Activated CD4-positive, alpha-beta T cell treated with anti-CD3 and anti-CD28 coated beads for 36 hours (primary cell): ENCODE measurements at regions of chr20 and their contacts with region 1.

Region 1: DNA sequence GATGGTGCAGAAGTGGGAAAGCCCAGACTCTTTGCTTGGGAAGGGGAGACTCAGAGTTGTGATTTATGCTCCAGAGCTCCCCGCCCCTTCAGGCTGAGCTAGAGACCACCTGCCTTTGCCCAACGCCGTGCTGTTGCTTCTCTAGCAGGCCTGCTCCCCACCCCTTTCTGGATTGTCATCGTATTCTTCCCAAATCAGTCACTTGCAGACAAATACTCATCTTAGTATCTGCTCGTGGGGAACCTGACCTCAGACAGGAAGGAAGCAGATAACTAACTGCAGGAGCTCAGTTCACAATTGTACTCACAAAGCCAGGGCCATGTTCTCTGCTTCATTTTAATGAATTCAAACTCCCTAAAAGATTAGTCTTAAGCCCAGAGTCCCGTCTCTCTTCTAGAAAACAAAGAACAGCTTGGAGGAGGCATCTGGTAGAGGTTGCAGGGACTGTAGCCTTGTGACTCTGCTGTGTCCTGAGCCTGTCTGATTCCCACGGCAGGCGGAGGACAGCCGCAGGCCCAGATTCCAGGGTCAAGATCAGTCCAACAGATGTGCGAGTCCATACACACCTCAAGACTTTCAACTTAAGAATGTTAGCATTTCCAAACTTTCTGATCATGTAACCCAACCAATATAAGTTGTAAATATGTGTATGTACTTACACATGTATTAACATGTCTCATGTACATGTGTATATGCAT is 57.2 kb upstream of the GGTLC1 start:
- DNase-seq: peak; percentile 66
- ATAC-seq: peak; percentile 87
- H3K4me3 Mint-ChIP-seq: no peak overlapping the region
- H3K27ac Mint-ChIP-seq: peak overlapping the region; percentile 75
- H3K4me1 Mint-ChIP-seq: peaks cover 51% of the 10 kb centered on the region
- H3K27me3 Mint-ChIP-seq: no peaks in the 10 kb centered on the region

Region 2: DNA sequence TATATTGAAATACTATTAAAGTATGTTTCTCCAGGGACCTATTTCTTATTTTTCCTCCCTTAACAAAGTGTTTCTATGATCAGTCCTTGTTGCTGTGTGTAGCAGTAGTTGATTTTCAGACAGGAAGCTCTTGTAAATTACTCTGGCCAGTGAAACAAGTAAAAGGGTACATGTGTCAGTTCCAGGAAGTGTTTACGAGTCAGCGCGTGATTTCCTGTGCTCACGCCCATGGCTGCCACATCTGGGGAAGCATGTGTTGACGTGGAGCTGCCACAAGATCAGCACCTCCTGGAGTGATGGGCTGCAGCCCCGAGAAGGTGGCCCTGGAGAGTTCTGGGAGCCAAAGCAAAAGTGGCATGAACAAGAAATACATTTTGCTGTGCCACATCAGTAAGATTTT is 18.5 kb before region 1 on chr20:
- CTCF ChIA-PET with region 1: interaction called, 6 read pairs
- POLR2A ChIA-PET with region 1: no interaction called
- intact Hi-C with region 1: loop called in 1 of 2 experiments (anchors 2 kb)
- DNase-seq: peak; percentile 85
- ATAC-seq: peak; percentile 96
- H3K4me3 Mint-ChIP-seq: peak overlapping the region; percentile 42
- H3K27ac Mint-ChIP-seq: peak overlapping the region; percentile 91
- H3K4me1 Mint-ChIP-seq: peaks cover 35% of the 10 kb centered on the region
- H3K27me3 Mint-ChIP-seq: no peaks in the 10 kb centered on the region

Region 3: DNA sequence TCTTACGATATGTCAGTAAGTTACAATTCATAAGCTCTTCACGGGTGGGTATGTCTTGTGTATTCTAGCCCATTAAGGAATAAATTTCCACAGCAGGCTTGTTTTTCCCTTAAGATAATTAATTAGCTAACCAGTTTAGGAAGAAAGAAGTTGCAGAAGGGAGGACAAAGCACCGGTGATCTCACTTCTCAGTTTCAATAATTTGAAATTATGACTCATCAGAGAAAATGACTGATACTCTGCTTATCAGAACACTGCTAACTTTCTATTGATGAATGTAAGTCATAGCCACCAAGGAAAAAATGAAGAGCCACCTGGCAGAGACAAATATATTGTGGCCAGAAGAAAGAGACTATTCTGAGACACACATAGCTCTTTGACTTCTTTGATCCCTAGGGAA is 1114.7 kb after region 1 on chr20:
- CTCF ChIA-PET with region 1: no interaction called
- POLR2A ChIA-PET with region 1: no interaction called
- intact Hi-C with region 1: loop called in 1 of 2 experiments (anchors 10 kb)
- DNase-seq: no peak
- ATAC-seq: peak; percentile 93
- H3K4me3 Mint-ChIP-seq: no peak overlapping the region
- H3K27ac Mint-ChIP-seq: peak overlapping the region; percentile 69
- H3K4me1 Mint-ChIP-seq: peaks cover 13% of the 10 kb centered on the region
- H3K27me3 Mint-ChIP-seq: no peaks in the 10 kb centered on the region